HEK293T (cell line): ENCODE measurements at regions of chr16 and their contacts with region 1.

Region 1: DNA sequence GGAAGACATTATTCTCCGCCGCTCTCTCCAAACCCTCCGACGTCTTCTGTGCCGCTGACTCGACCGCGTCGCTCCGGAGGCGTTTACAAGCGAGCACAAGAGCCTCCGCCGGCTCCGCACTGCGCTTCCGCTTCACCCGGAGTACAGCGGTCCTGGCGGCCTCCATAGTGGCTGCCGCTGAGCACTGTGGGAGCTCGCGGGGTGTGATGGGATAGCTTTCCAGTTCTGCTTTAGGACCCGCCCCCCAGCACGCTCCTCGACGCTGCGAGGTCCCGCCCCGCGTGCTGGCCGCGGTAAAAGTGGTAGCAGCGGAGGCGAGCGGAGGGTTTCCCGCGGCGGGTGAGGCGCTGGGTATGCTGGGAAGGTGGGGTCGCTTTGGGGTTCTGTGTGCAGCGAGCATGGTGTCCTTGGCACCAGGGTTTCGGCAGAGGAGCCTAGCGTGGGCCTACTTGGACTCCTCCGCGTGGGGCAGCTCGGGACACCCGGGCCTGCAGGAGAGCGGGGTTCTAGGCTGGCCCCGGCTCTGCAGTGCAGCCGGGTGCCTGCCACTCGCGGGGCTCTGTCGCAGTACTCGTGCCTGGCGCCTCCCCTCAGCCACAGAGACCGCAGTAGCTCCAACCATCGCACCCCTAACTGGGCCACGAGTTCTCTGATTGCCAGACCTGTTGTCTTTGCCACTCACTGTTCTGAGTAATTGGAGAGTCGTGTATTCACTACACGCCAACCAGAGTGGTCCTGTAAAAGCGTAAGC is at the starts of genes PRMT7 and SLC7A6OS:
- DNase-seq: peak; percentile 95

Region 2: GRCh38 chr16:68022704-68023522 is 288.0 kb before region 1 on chr16 and contains the starts of genes DDX28 and DUS2:
- CTCF ChIA-PET with region 1: no interaction called
- POLR2A ChIA-PET with region 1: no interaction called
- DNase-seq: peak; percentile 91

Region 3: DNA sequence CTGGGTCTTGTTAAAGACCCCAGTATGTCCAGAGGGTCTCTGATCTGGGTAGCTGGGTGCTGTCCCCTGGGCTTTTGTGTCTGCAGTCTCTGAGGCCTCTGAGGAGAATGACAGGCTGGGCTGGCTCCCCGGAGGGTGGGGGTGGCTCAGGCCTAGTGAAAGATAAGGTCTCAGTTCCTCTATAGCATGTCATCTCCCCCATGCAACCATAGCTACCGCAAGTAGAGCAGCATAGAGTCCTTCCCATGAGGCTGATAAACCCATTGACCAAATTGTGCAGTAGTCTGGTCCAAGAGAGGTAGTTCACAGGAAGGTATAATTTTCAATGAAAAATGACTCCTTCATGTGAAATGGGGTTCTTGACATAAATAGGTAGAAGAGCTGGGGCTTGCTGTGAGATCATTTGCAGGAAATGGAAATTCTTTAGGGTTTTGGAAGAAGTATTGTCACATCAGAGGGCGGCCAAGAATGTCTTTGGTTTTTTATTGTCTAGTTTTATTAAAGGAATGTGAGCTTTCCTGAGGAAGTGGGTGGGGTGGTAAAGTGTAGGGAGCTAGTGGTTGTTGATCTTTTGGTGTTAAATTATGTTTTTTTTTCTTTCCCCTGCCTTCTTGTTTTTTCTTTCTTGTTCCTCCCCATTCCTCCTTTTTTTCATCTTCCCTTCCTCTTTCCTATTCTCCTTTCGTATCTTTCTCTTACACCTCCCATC is 21.2 kb before region 1 on chr16:
- CTCF ChIA-PET with region 1: no interaction called
- POLR2A ChIA-PET with region 1: interaction called, 13 read pairs
- DNase-seq: no peak

Region 4: DNA sequence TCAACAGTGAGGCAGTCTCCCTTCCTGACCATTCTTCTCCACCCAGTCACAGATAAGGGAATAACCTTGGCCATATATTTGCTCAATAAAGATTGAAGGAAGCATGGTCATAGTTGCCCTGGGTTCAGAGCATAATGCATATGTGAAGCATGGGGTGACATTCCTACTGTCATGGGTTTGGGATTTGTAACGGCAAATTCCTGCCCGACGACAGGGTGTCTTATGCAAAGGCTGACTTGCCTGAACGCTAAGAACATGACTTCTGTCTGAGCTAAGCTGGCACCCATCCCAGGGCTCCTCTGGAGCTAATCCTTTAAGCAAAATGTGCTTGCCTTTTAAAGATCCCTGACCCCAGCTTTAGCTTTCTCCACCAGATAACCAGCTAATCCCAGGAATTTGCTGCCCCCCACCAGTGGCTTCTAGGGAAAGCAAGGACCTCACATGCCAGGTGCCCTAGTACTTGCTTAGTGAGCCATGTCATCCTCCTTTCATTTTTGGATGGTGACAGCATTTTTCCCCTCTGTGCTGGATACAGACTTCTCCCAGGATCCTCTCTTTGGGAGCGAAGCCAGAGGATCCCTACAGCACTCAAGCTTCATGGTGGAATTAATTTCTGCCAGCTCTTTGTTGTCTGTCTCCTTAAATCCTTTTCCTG is 11.9 kb before region 1 on chr16:
- CTCF ChIA-PET with region 1: no interaction called
- POLR2A ChIA-PET with region 1: interaction called, 20 read pairs
- DNase-seq: no peak

Region 5: DNA sequence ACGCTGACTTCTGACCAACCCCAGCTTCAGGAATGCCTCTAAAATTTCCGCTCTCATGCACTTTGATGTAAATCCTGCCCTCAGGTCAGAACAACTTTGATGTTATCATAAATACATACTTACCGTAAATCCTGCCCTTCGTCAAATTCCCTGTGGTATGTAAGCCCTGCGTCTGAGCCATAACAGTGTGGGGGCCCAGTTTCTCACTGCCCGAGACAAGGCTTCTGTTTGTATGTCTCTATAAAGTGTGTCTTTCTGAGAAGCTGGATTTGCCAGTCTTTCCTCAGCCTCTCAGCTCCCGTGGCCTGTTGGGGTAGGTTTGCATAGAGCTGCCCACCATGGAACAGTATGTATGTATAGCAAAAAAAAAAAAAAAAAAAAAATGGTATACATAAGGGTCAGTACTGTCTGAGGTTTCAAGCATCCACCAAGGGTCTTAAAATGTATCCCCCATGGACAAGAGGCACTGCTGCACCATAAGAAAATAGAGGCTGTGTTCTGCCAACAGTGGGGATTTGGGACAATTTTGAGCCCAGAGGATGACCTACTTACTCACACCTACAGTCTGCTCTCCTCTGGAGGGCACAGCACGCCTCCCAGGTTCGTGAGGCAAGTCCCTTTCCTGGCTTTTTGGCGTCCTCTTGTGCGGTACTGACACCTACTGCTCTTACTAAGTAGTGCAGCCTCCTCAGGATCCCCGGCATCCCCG is 17.4 kb after region 1 on chr16:
- CTCF ChIA-PET with region 1: interaction called, 3 read pairs
- POLR2A ChIA-PET with region 1: interaction called, 31 read pairs
- DNase-seq: peak; percentile 90